A673 (cell line): ENCODE measurements at regions of chr11 and their contacts with region 1.

Region 1: GRCh38 chr11:35549787-35550186 is 24.4 kb upstream of the PAMR1 start:
- DNase-seq: peak; percentile 77
- H3K4me3 ChIP-seq: no peak overlapping the region
- H3K27ac ChIP-seq: no peak overlapping the region
- H3K4me1 ChIP-seq: peaks cover 40% of the 10 kb centered on the region
- H3K27me3 ChIP-seq: peaks cover 7% of the 10 kb centered on the region
- CTCF ChIP-seq: no peak

Region 2: DNA sequence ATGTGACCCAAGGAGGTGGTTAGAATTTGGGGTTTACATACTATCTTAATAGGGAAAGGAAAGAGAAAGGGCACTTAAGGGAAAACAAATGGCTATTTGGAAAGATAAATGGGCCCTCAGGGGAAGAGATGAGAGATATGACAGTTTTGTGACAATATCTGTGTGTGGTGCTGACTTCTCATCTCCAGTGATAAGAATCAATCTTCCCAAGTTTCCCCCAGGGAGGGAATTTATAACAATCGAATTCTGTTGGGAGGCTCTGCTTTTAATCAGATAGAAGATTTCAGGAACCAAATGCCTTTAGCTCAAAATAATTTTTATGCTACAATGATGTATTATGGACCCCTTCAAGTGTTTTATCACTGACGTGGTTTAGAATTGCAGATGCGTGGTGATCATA is 21.9 kb after region 1 on chr11:
- CTCF ChIA-PET with region 1: no interaction called
- POLR2A ChIA-PET with region 1: no interaction called
- intact Hi-C with region 1: loop called (anchors 2 kb)
- DNase-seq: no peak
- H3K4me3 ChIP-seq: no peak overlapping the region
- H3K27ac ChIP-seq: no peak overlapping the region
- H3K4me1 ChIP-seq: no peaks in the 10 kb centered on the region
- H3K27me3 ChIP-seq: no peaks in the 10 kb centered on the region
- CTCF ChIP-seq: no peak

Region 3: DNA sequence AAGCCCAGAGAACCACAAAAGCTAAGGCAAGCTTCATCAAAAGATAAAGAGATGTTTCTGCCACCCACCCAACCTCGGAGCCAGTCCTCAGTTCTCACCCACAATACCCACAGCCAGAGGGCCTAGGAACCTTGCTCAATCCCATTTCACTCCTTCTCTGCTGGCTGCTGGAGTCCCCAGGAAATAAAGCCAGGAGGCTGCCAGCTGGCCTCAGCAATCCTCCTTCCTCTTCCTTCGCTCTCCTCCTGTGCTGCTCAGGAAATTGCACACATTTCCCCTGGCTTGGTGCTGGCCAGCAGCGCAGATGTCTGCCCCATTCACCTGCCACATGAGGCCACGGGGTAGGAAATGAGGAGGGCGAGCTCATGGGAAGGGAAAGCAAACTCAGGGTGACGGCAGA is 302.3 kb after region 1 on chr11:
- CTCF ChIA-PET with region 1: no interaction called
- POLR2A ChIA-PET with region 1: no interaction called
- intact Hi-C with region 1: no loop called
- DNase-seq: no peak
- H3K4me3 ChIP-seq: no peak overlapping the region
- H3K27ac ChIP-seq: no peak overlapping the region
- H3K4me1 ChIP-seq: no peaks in the 10 kb centered on the region
- H3K27me3 ChIP-seq: peaks cover 17% of the 10 kb centered on the region
- CTCF ChIP-seq: no peak